PC-3 (cell line): ENCODE measurements at regions of chr2 and their contacts with region 1.

Region 1: DNA sequence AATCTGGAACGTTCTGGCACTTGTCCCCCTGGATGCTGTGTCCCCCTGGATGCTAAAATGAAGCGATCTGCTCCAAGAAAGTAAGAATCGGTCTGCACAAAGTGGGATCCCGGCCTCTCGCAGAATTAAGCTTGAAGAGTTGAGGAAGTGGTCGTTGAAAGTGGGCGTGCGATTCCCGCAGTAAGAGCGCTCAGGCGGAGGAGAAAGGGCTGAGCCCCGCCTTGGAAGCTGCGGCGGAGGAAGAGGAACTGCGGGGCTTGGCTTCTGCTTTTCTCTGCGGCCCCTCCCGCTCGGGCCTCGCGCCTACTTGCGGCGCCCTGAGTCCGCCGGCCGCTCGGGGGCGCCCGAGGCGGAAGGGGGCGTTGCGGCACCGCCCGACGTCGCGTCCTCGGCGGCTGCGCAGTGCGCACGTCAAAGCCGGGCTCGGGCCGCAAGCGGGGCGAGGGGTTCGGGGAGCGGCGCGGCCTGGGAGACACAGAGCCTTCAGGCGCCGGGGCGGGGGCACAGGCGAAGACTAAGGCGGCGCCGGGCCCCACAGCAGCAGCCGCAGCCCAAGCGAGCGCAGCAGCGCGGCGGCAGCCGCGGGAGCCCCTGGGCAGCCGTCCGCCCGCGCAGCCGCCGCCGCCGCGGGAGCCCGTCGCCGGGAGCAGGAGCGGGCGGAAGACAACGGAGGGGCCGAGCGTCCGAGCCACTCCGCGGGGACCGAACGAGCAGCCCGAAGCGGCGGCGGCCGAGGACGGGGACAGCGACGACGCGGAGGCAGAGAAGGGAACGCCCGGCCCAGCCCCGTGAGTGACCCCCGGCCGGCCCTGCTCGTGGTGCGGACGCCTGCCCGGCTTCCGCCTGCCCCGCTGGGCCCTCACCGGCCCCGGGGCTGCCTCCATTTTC is at the start of gene CAB39:
- DNase-seq: peak; percentile 92
- ATAC-seq: peak; percentile 80
- H3K4me3 ChIP-seq: peak within 1 kb of the TSS; percentile 100
- H3K27ac ChIP-seq: peak within 1 kb of the TSS; percentile 92
- H3K4me1 ChIP-seq: peaks cover 28% of the 10 kb centered on the region
- H3K27me3 ChIP-seq: no peaks in the 10 kb centered on the region
- CTCF ChIP-seq: peak; percentile 72
- total RNA-seq, gene CAB39: 52.5 and 59.6 TPM in 2 replicates

Region 2: GRCh38 chr2:230640540-230641011 is 72.1 kb before region 1 on chr2:
- CTCF ChIA-PET with region 1: interaction called, 4 read pairs
- POLR2A ChIA-PET with region 1: interaction called, 10 read pairs
- intact Hi-C with region 1: loop called (anchors 1 kb)
- DNase-seq: peak; percentile 86
- ATAC-seq: peak; percentile 97
- H3K4me3 ChIP-seq: no peak overlapping the region
- H3K27ac ChIP-seq: peak overlapping the region; percentile 79
- H3K4me1 ChIP-seq: peaks cover 13% of the 10 kb centered on the region
- H3K27me3 ChIP-seq: no peaks in the 10 kb centered on the region
- CTCF ChIP-seq: no peak

Region 3: GRCh38 chr2:230691005-230691647 is 21.6 kb before region 1 on chr2:
- CTCF ChIA-PET with region 1: no interaction called
- POLR2A ChIA-PET with region 1: no interaction called
- intact Hi-C with region 1: loop called (anchors 2 kb)
- DNase-seq: peak; percentile 99
- ATAC-seq: peak; percentile 77
- H3K4me3 ChIP-seq: no peak overlapping the region; the same call in 1 of the 2 replicates
- H3K27ac ChIP-seq: peak overlapping the region; percentile 82
- H3K4me1 ChIP-seq: peaks cover 66% of the 10 kb centered on the region
- H3K27me3 ChIP-seq: no peaks in the 10 kb centered on the region
- CTCF ChIP-seq: no peak

Region 4: DNA sequence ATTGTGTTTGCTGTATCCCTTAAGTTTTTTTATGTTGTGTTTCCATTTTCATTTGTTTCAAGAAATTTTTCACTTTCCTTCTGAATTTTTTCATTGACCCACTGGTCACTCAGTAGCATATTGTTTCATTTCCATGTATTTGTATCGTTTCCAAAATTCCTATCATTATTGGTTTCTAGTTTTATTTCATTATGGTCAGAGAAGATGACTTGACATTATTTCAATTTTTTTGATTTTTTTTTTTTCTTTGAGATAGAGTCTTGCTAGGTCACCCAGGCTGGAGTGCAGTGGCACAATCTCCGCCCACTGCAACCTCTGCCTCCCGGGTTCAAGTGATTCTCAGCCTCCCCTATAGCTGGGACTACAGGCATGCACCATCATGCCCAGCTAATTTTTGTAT is 11.4 kb before region 1 on chr2:
- CTCF ChIA-PET with region 1: no interaction called
- POLR2A ChIA-PET with region 1: no interaction called
- intact Hi-C with region 1: no loop called
- DNase-seq: no peak
- ATAC-seq: no peak
- H3K4me3 ChIP-seq: no peak overlapping the region
- H3K27ac ChIP-seq: no peak overlapping the region
- H3K4me1 ChIP-seq: peaks cover 15% of the 10 kb centered on the region
- H3K27me3 ChIP-seq: no peaks in the 10 kb centered on the region
- CTCF ChIP-seq: no peak

Region 5: DNA sequence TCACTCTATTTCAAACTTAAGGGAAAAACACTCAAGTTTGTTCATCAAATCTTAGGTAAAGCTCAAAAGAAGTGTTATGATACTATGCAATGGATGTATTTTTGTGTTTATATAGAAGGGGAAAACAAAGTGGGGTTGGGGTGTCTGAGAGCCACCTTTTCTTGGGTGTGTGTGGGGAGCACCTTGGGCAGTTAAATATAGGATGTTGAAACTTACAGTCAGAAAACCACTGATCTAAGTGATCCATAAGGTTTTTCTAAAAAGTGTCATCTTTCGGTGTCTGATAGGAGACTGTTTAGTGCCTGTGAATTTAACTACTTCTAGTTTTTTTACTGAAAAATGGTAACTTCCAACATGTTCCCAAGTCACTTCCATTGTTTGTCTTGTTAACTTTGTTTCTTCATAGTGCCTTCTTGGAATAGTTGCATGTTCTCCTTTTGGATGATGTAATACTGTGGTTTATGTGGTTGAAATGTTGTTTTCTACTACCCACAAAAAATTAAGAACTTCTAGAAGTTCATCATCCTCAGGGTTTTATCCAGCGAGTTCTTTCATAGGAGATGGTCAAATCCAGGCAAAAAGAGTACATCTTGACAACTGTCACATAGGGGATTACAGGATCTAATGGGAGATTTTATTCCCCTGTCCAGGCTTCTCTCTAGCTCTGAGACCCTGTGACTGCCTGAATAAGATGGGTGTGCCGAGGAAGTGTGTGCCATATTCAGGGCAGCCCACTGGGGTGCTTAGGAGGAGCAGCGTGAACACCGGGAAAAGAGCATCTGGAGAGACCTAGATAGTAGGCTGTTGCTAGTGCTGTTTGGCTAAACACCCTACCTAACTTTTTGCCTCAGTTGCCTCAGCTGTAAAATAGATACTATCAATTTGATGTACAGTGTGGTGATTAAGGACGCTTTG is 46.1 kb after region 1 on chr2:
- CTCF ChIA-PET with region 1: no interaction called
- POLR2A ChIA-PET with region 1: no interaction called
- intact Hi-C with region 1: loop called (anchors 5 kb)
- DNase-seq: no peak
- ATAC-seq: no peak
- H3K4me3 ChIP-seq: no peak overlapping the region
- H3K27ac ChIP-seq: peak overlapping the region; percentile 12; the same call in 1 of the 2 replicates
- H3K4me1 ChIP-seq: peaks cover 35% of the 10 kb centered on the region
- H3K27me3 ChIP-seq: no peaks in the 10 kb centered on the region
- CTCF ChIP-seq: no peak

Region 6: DNA sequence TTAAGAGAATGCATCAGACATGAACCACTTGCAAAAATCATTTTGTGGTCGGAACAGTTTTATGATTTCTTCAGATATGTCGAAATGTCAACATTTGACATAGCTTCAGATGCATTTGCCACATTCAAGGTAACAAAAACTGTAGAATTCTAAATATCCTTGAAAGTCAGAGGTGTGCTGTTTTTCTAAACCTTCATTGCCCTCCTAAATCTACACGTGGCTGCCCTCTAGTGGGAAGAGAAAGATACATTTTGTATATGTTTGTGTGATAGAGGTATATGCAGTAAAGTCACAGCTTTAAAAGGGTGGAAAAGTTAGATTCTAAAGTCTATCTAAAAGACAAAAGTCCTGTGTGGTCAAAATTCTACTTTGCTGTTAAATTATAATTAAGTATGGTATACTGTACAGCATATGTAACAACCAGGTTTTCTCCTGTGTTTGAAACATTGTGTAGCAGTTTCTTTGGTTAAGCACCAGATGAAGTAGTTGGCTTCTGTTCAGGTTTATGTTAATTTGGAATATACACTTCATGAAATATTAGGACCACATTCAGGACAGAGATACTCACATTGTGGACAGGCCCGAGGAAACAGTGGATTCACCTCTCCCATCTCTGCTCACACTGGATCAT is 86.2 kb after region 1 on chr2:
- CTCF ChIA-PET with region 1: interaction called, 22 read pairs
- POLR2A ChIA-PET with region 1: interaction called, 4 read pairs
- intact Hi-C with region 1: loop called (anchors 1 kb)
- DNase-seq: peak; percentile 87
- ATAC-seq: peak; percentile 28
- H3K4me3 ChIP-seq: no peak overlapping the region
- H3K27ac ChIP-seq: peak overlapping the region; percentile 98
- H3K4me1 ChIP-seq: peaks cover 51% of the 10 kb centered on the region
- H3K27me3 ChIP-seq: no peaks in the 10 kb centered on the region
- CTCF ChIP-seq: peak; percentile 77